Spleen (tissue), 13 donors: ENCODE measurements at regions of chr19 and their contacts with region 1.

Region 1: DNA sequence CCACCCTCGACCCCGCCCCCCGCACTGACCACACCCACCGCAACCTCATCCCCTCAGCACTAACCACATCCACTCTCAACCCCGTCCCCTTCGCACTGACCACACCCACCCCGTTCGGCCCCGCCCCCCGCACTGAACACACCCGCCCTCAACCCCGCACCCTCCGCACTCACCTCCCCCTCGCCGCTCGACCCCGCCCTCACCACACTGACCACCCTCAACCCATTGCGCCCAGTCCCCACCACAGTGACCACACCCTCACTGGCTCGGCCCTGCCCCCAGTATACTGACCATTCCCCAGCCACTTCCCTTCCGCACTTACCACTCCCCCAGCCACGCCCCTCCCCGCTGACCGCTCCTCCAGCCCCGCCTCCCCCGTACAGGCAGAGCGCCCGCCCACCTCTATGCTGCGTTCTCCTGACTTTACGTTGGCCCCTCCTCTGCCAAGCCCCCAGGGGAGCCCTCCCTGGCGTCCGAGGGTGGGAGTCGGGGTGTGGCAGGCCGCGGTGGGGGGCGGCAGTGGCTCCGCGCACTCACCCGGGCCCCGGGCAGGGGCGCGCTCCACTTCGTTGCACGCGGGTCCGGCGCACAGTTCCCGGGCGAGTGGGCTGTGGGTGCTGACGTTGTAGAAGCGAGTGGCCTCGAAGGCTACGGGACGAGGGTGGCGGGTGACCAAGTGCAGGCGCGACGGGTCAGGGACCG is 8.5 kb downstream of the F2RL3 start:
- DNase-seq: peak; percentile 95
- H3K4me3 ChIP-seq: peak overlapping the region; percentile 48 to 80 (median 53)
- H3K27ac ChIP-seq: peak overlapping the region; percentile 42 to 89 (median 76)
- H3K4me1 ChIP-seq: peaks cover 0 to 72% (median 51%) of the 10 kb centered on the region in 6 donors
- H3K27me3 ChIP-seq: peaks cover 0 to 56% (median 5%) of the 10 kb centered on the region in 7 donors
- CTCF ChIP-seq: no peak
- POLR2A ChIP-seq: no peak

Region 2: GRCh38 chr19:16771618-16772017 is 125.7 kb before region 1 on chr19:
- intact Hi-C with region 1: loop called (anchors 10 kb)
- DNase-seq: peak; percentile 81
- H3K4me3 ChIP-seq: no peak overlapping the region
- H3K27ac ChIP-seq: no peak overlapping the region
- H3K4me1 ChIP-seq: peaks cover 0 to 7% (median 0%) of the 10 kb centered on the region in 6 donors
- H3K27me3 ChIP-seq: peaks cover 0 to 17% (median 0%) of the 10 kb centered on the region in 7 donors
- CTCF ChIP-seq: peak; percentile 74 to 93 (median 87)
- POLR2A ChIP-seq: no peak

Region 3: DNA sequence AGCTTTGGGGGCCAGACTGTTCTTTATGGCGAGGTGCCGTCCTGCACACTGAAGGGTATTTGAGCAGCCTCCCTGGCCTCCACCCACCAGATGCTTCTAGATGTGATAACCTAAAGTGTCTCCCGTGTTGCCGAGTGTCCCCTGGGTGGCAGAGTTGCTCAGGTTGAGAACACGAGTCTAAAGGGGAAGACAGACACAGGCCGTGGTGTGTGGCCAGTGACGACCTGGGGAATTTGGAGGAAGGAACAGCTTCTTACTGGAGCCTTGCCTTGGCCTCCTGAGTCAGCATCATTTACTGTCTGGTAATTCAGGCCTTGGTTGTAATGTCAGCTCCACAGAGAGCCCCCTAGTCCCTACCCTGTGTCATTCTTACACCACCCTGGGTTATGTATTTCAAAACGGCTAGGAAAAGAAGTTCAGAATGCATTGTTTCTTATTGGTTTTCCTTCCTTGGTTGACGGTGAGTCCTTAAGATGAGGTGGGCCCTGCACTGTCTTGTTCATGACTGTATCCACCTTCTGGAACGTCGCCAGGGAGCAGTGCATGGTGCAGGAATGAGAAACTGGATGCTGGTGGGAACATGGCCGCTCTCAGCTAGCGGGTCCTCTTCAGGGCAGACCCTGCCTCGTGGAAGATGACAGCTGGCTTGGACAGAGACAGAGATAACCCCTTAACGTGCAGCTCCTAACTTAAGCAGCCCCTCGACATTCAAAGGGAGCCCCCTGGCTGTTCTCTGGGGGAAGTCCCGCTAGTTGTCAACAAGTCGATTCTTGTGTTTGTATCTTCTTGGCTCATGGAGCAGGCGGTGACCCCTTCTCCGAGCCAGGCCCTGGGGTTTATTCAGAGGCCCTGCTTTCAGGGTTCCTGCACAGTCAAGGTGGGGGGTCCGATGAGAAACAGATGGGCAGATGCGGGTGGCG is 60.9 kb before region 1 on chr19:
- intact Hi-C with region 1: loop called (anchors 10 kb)
- DNase-seq: peak; percentile 81
- H3K4me3 ChIP-seq: no peak overlapping the region
- H3K27ac ChIP-seq: peak overlapping the region in 4 of 8 donors; percentile 21 to 36 (median 26)
- H3K4me1 ChIP-seq: peaks cover 0 to 54% (median 30%) of the 10 kb centered on the region in 6 donors
- H3K27me3 ChIP-seq: no peaks in the 10 kb centered on the region
- CTCF ChIP-seq: peak in 3 of 11 experiments; percentile 10 to 33 (median 29)
- POLR2A ChIP-seq: no peak

Region 4: GRCh38 chr19:16970821-16971220 is 73.5 kb after region 1 on chr19:
- intact Hi-C with region 1: no loop called
- DNase-seq: peak; percentile 34
- H3K4me3 ChIP-seq: no peak overlapping the region
- H3K27ac ChIP-seq: no peak overlapping the region
- H3K4me1 ChIP-seq: no peaks in the 10 kb centered on the region
- H3K27me3 ChIP-seq: no peaks in the 10 kb centered on the region
- CTCF ChIP-seq: no peak
- POLR2A ChIP-seq: no peak